Activated CD4-positive, alpha-beta memory T cell treated with anti-CD3 and anti-CD28 coated beads for 36 hours (primary cell): ENCODE measurements at regions of chr5 and their contacts with region 1.

Region 1: GRCh38 chr5:6480133-6481051 is 31.7 kb downstream of the UBE2QL1 start:
- DNase-seq: no peak
- H3K4me3 Mint-ChIP-seq: no peak overlapping the region
- H3K27ac Mint-ChIP-seq: no peak overlapping the region
- H3K4me1 Mint-ChIP-seq: peaks cover 4% of the 10 kb centered on the region
- H3K27me3 Mint-ChIP-seq: peaks cover 17% of the 10 kb centered on the region

Region 2: DNA sequence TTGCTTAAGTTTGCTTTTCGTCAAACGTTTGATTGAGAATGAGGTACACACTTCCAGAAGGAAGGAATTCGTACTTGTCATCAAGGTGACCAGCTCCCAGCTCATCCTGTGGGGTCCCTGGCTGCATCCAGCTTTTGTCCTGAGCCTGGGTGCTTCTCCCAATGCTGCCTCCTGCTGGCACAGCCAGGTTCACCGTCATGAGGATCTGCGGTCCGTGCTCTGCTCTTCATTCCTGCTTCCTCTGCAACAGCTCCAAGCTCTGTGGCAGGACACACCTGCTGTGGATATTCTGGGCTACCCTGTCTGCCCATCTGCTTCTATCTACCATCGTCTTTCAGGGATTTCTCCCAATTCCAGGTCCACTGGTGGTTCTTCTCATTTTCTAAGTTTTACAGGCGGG is 45.0 kb before region 1 on chr5:
- CTCF ChIA-PET with region 1: no interaction called
- POLR2A ChIA-PET with region 1: no interaction called
- intact Hi-C with region 1: no loop called
- DNase-seq: peak; percentile 35
- H3K4me3 Mint-ChIP-seq: no peak overlapping the region
- H3K27ac Mint-ChIP-seq: no peak overlapping the region
- H3K4me1 Mint-ChIP-seq: no peaks in the 10 kb centered on the region
- H3K27me3 Mint-ChIP-seq: peaks cover 27% of the 10 kb centered on the region

Region 3: GRCh38 chr5:6496207-6496584 is 15.8 kb after region 1 on chr5:
- CTCF ChIA-PET with region 1: interaction called, 4 read pairs
- POLR2A ChIA-PET with region 1: no interaction called
- intact Hi-C with region 1: loop called (anchors 1 kb)
- DNase-seq: peak; percentile 53
- H3K4me3 Mint-ChIP-seq: no peak overlapping the region
- H3K27ac Mint-ChIP-seq: no peak overlapping the region
- H3K4me1 Mint-ChIP-seq: peaks cover 12% of the 10 kb centered on the region
- H3K27me3 Mint-ChIP-seq: peaks cover 20% of the 10 kb centered on the region